ENCODE measurements at regions of chr4 and their contacts with region 1.

Region 1: DNA sequence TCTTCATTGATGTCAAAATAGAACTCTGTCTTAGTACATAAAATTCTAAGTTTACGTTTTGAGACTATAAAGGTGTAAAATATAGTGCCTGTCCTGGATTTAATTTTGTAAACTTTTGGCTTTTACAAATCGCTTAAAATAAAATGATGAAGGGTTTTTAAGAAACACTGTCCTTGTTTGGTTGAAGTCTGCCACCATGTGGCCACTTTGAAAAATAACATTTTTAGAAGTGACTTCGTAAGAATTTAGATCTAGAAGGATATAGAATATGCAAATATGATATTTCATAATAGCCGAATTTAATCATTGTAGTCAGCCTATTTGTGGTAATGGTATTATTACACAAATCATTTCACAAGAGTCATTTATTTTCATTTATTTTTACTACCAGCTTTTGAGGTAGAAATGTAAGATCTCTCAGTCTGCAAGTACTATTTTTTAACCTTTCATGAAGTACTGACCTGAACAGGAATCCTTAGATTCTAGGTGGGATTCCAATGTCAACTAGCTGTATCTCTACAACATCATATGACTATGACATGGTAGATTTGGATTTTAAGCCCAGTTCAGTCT is 31.0 kb upstream of the FAT4 start:
- DNase-seq: no peak
- ATAC-seq: peak; percentile 49; the same call in 1 of the 3 replicates
- H3K4me3 ChIP-seq: no peak overlapping the region
- H3K27ac ChIP-seq: no peak overlapping the region
- H3K4me1 ChIP-seq: no peaks in the 10 kb centered on the region
- H3K27me3 ChIP-seq: no peaks in the 10 kb centered on the region
- CTCF ChIP-seq: peak; percentile 30 to 44 (median 34); a peak in 4 of 6 replicates
- EP300 ChIP-seq: no peak
- POLR2A ChIP-seq: no peak
- RAD21 ChIP-seq: peak; percentile 69

Region 2: DNA sequence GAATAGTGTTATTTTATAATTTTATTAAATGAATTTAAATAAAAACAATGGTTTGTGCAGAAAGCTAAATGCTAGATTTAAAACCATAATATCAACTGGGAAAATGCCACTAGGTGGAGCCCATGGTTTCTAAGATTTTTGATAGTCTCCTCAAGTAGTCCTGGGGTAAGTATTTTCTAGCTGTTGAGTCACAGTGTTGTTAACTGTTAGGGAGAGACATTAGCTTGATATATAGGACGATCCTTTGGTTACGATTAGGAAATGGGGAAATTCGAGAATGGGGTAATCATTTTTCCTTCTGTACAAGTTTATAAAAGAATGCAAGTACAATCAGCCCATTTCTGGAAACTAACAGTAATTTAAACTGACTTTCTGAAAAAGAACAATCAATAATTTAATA is 949.7 kb before region 1 on chr4:
- CTCF ChIA-PET with region 1: interaction called, 45 read pairs
- POLR2A ChIA-PET with region 1: no interaction called
- RAD21 ChIA-PET with region 1: interaction called, 27 read pairs
- SMC1A ChIA-PET with region 1: interaction called, 11 read pairs
- in situ Hi-C with region 1: loop called (anchors 25 kb)
- intact Hi-C with region 1: loop called (anchors 1 kb)
- DNase-seq: no peak
- ATAC-seq: peak; percentile 62
- H3K4me3 ChIP-seq: no peak overlapping the region
- H3K27ac ChIP-seq: no peak overlapping the region
- H3K4me1 ChIP-seq: no peaks in the 10 kb centered on the region
- H3K27me3 ChIP-seq: no peaks in the 10 kb centered on the region; a peak in 1 of 4 replicates
- CTCF ChIP-seq: peak; percentile 25 to 39 (median 37); a peak in 3 of 6 replicates
- EP300 ChIP-seq: no peak
- POLR2A ChIP-seq: no peak
- RAD21 ChIP-seq: peak; percentile 55

Region 3: GRCh38 chr4:124717101-124717500 is 566.7 kb before region 1 on chr4:
- CTCF ChIA-PET with region 1: interaction called, 9 read pairs
- POLR2A ChIA-PET with region 1: no interaction called
- RAD21 ChIA-PET with region 1: no interaction called
- SMC1A ChIA-PET with region 1: no interaction called
- in situ Hi-C with region 1: no loop called
- intact Hi-C with region 1: loop called (anchors 5 kb)
- DNase-seq: no peak
- ATAC-seq: no peak
- H3K4me3 ChIP-seq: no peak overlapping the region
- H3K27ac ChIP-seq: no peak overlapping the region
- H3K4me1 ChIP-seq: no peaks in the 10 kb centered on the region
- H3K27me3 ChIP-seq: no peaks in the 10 kb centered on the region; a peak in 1 of 4 replicates
- CTCF ChIP-seq: no peak
- EP300 ChIP-seq: no peak
- POLR2A ChIP-seq: no peak
- RAD21 ChIP-seq: no peak

Region 4: GRCh38 chr4:125297116-125297515 is 13.3 kb after region 1 on chr4:
- CTCF ChIA-PET with region 1: interaction called, 11 read pairs
- POLR2A ChIA-PET with region 1: no interaction called
- RAD21 ChIA-PET with region 1: interaction called, 3 read pairs
- SMC1A ChIA-PET with region 1: interaction called, 3 read pairs
- in situ Hi-C with region 1: no loop called
- intact Hi-C with region 1: no loop called
- DNase-seq: no peak
- ATAC-seq: no peak
- H3K4me3 ChIP-seq: no peak overlapping the region
- H3K27ac ChIP-seq: no peak overlapping the region
- H3K4me1 ChIP-seq: no peaks in the 10 kb centered on the region
- H3K27me3 ChIP-seq: no peaks in the 10 kb centered on the region
- CTCF ChIP-seq: no peak
- EP300 ChIP-seq: no peak
- POLR2A ChIP-seq: no peak
- RAD21 ChIP-seq: no peak

Measured in GM12878 (cell line).